BJ (cell line): ENCODE measurements at regions of chr19 and their contacts with region 1.

Region 1: DNA sequence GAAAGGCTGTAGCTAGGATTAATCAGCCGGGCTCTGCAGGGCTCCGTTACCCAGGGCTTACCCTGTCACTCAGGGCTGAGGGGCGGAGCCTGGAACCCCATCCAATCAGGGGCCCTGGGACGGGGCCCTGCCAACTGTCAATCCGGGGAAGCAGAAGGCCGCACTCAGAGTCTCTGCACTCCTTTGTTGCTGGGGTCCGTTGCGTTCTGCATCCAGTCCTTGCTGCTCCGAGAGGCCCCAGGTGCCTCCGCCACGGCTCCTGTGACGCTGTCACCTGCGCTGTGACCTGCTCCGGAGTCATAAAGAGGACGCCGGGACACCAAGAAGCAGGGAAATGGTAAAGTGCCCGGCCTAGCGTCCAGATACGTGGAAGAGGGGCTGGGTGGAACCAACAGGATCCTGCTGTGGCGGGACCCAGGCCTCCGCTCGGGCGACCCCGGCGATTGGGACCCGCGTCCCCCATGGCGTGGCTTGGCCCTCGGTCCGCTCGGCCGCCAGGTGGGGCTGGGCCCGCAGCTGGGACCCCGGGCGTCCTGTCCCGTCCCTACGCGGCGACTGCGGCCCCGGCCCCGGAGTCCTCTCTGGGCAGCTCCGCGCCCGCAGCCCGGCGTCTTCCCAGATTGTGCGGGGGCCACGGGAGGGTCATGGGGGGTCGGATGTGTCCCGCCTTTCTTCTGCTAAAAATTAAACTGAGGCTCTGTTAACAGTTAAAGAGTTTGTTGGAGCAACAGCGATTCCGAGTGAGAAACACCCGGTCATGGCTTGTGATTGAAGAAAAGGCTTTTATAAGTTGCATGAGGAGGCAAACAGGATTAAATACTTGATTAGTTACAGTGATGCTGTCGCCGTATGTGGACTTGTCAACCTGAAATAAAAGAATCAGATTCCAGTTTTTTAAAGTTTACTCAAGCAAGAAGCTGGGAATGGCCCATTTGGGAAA is at the start of gene ZNF491:
- DNase-seq: peak; percentile 49
- H3K4me3 ChIP-seq: peak within 1 kb of the TSS; percentile 68
- H3K27me3 ChIP-seq: no peaks in the 10 kb centered on the region
- CTCF ChIP-seq: peak; percentile 19; the same call in 1 of the 2 replicates
- polyA plus RNA-seq, gene ZNF491: 0.67 and 1.3 TPM in 2 replicates

Region 2: GRCh38 chr19:11814029-11814699 is 15.5 kb after region 1 on chr19 and contains the start of gene ZNF440:
- CTCF ChIA-PET with region 1: interaction called, 53 read pairs
- POLR2A ChIA-PET with region 1: no interaction called
- DNase-seq: peak; percentile 71
- H3K4me3 ChIP-seq: peak within 1 kb of the TSS; percentile 59
- H3K27me3 ChIP-seq: no peaks in the 10 kb centered on the region
- CTCF ChIP-seq: no peak
- polyA plus RNA-seq, gene ZNF440: 2.0 and 3.8 TPM in 2 replicates

Region 3: DNA sequence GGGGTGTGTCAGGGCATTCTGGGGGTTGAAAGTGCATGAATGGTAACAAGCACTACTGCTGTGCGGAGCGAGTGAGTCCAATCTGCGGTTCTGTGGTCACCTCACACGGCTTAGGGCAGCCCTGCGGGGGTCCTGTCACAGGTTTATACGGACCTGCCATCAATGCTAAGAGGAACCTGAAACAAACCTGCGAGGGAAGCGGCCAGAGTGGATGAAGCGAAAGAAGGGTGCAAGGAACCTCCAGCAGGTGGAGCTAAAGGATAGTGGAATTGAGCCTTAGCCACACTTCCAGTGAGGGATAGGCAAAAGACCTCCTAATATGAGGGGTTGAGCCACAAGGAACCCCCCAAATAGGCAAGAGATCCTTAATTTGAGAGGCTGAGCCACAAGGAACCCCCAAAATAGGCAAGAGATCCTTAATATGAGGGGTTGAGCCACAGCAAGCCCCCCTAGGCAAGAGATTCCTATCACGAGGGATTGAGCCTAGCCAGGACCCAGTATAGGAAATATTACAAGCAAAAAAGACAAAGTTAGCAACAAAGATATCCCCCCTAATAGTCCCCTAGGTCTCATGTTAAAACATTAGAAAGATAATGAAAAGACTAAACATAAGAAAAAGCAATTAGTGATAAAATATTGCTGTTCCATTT is 82.6 kb after region 1 on chr19:
- CTCF ChIA-PET with region 1: interaction called, 12 read pairs
- POLR2A ChIA-PET with region 1: no interaction called
- DNase-seq: no peak
- H3K4me3 ChIP-seq: no peak overlapping the region
- H3K27me3 ChIP-seq: no peaks in the 10 kb centered on the region; the same call in 1 of the 2 replicates
- CTCF ChIP-seq: peak; percentile 77

Region 4: DNA sequence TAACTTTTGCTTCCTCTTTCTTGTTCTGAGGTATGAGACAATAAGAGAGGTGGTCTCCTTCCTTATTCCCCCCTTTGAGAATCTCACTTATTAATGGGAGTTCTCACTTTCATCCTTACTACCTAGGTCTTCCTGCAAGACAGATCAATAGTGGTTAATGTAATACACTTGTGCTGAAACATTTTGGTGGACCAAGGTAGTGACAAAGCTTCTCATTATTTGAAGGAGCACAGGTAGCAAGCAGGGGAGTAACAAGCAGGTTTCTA is 144.1 kb after region 1 on chr19:
- CTCF ChIA-PET with region 1: no interaction called
- POLR2A ChIA-PET with region 1: no interaction called
- DNase-seq: no peak
- H3K4me3 ChIP-seq: no peak overlapping the region
- H3K27me3 ChIP-seq: no peaks in the 10 kb centered on the region
- CTCF ChIP-seq: no peak